Left colon (tissue), 2 donors: ENCODE measurements at regions of chr10 and their contacts with region 1.

Region 1: DNA sequence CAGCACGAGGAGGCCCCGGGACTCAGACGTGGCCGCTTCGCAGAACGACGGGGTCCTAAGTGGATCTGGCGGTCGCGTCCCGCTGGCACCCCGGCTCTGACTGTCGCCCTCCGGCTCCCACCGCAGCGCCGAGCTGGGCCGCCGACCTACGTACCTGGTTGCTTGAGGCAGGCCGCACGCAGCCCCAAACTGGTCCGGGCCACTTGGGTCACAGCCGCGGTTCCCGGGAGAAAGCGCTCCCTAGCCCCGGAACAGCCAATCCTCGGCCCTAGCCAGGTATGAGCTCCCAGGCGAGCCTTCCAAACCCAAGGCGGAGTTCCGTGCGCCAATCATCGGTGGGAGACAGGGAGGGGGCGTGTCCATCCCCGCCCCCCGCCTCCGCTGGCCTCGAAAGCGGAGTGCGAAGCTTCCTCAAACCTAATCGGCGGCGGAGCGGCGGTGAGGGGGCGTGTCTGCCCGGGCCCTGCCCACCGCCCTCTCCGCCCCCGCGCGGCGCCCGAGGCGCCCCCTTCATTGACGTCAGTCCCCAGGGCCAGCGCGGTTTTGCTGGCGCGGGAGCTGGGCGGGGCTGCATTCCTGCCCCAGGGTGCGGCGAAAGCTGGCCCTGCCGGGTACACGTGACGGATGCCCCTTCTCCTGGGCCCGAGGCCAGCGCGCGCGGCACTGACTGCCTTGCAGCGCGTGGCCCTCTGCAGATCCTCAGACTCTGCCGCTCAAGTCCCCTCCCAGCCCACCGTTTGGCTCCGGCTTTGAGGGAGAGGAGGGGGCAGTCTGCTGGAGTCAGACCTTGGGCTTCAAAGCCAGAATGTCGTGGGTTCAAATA is at the start of gene AVPI1:
- DNase-seq: peak; percentile 98
- ATAC-seq: peak; percentile 78
- total RNA-seq, gene AVPI1: 38.7 to 43.8 TPM

Region 2: DNA sequence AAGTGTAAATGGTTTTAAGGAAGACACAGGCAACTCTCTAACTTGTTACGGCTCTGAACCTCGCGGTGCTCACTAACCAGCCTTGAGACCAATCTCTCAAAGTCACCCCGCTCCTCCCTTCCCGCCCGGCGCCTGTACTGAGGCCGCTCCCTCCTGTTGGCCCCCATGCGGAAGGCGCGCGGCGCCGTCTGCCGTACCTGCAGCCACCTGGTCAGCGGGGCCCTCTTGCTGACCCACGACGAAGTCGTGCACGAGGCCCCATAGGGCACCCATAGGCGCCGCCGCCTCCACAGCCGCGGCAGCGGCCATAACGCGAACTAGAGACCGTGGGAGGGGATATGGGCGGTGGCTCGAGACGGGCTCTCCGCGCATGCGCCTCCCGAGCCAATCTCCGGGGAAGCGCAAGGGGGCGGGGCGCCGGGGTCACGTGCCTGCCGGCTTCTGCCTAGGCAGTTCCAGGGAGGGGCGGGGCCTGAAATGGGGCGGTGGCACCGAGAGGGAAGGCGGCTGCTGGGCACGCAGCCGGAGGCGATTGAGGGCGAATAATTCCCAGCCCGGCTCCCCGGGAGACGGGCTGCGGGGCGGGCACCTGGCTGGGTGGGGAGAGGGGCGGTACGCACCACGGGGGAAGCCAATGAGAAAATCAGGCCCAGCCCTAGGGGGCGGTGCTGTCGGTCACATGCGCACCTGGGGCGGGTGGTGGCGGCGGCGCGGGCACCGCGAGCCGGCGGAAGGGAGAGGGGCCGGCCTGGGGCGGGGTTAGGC is 188.9 kb before region 1 on chr10 and contains the start of gene MMS19:
- intact Hi-C with region 1: no loop called
- DNase-seq: peak; percentile 99 to 100
- ATAC-seq: peak; percentile 86
- total RNA-seq, gene MMS19: 38.9 to 42.3 TPM

Region 3: GRCh38 chr10:97736902-97737769 is 50.0 kb after region 1 on chr10 and contains the start of gene ZFYVE27:
- intact Hi-C with region 1: loop called in 1 of 2 experiments (anchors 10 kb)
- DNase-seq: peak; percentile 95 to 98
- ATAC-seq: peak; percentile 84
- total RNA-seq, gene ZFYVE27: 52.1 to 57.6 TPM

Region 4: GRCh38 chr10:98293560-98294269 is 606.5 kb after region 1 on chr10:
- intact Hi-C with region 1: no loop called
- DNase-seq: no peak
- ATAC-seq: no peak